PC-3 (cell line): ENCODE measurements at regions of chrX and their contacts with region 1.

Region 1: GRCh38 chrX:49043220-49043986 is at the start of gene TFE3:
- DNase-seq: peak; percentile 99
- ATAC-seq: peak; percentile 78
- H3K4me3 ChIP-seq: peak within 1 kb of the TSS; percentile 96
- H3K27ac ChIP-seq: peak within 1 kb of the TSS; percentile 65
- H3K4me1 ChIP-seq: peaks cover 34% of the 10 kb centered on the region
- H3K27me3 ChIP-seq: no peaks in the 10 kb centered on the region
- CTCF ChIP-seq: peak; percentile 68
- total RNA-seq, gene TFE3: 46.9 and 56.9 TPM in 2 replicates

Region 2: GRCh38 chrX:48897621-48898306 is 145.6 kb before region 1 on chrX and contains the starts of genes PQBP1 and TIMM17B:
- CTCF ChIA-PET with region 1: no interaction called
- POLR2A ChIA-PET with region 1: no interaction called
- intact Hi-C with region 1: loop called (anchors 5 kb)
- DNase-seq: peak; percentile 97
- ATAC-seq: peak; percentile 93
- H3K4me3 ChIP-seq: peak within 1 kb of the TSS; percentile 92
- H3K27ac ChIP-seq: peak within 1 kb of the TSS; percentile 91
- H3K4me1 ChIP-seq: peaks cover 17% of the 10 kb centered on the region
- H3K27me3 ChIP-seq: no peaks in the 10 kb centered on the region
- CTCF ChIP-seq: no peak
- total RNA-seq, gene PQBP1: 189 and 241 TPM in 2 replicates
- total RNA-seq, gene TIMM17B: 101 and 119 TPM in 2 replicates

Region 3: DNA sequence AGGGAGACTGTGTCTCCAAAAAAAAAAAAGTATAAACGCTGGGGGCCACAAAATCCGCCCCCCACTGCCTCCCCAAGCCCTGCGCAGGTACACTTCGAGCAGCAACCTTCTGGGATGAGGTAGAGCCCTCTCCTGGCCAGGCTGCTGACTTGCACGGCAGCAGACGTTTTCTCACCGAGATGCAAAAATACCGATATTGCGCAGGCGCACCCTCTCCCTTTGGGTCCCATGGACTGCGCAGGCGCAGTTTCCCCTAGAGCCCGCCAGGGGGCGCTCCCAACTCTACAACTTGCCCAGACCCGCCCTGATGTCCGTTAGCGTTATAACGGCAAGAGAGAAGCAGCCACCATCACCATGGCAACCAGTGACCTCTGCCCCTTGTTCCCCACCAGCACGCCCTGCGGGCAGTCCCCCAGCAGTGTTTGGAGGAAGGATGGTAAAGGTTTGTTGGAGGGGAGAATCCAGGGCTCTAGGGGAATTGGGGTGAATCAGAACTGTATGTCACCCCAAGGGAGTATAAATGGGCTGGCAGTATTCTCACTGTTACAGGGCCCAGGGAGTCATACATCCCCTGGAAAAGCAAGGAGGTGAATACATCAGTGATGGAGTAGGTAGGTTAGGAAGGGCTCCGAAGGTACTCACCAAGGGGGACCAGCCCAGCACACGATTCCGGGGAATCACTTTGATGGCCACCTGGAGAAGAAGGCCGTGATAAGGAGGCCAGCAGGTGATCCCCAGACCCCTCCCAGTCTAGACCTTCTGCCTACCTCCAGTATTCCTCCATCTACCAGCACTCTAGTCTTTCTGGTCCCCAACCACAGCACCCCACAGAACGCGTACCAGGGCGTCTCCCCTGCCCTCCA is 126.0 kb before region 1 on chrX:
- CTCF ChIA-PET with region 1: no interaction called
- POLR2A ChIA-PET with region 1: no interaction called
- intact Hi-C with region 1: loop called (anchors 1 kb)
- DNase-seq: peak; percentile 93
- ATAC-seq: peak; percentile 36
- H3K4me3 ChIP-seq: peak overlapping the region; percentile 90
- H3K27ac ChIP-seq: no peak overlapping the region
- H3K4me1 ChIP-seq: peaks cover 19% of the 10 kb centered on the region
- H3K27me3 ChIP-seq: no peaks in the 10 kb centered on the region
- CTCF ChIP-seq: peak; percentile 91

Region 4: GRCh38 chrX:48933757-48934156 is 109.6 kb before region 1 on chrX:
- CTCF ChIA-PET with region 1: no interaction called
- POLR2A ChIA-PET with region 1: no interaction called
- intact Hi-C with region 1: no loop called
- DNase-seq: no peak
- ATAC-seq: no peak
- H3K4me3 ChIP-seq: no peak overlapping the region
- H3K27ac ChIP-seq: no peak overlapping the region
- H3K4me1 ChIP-seq: no peaks in the 10 kb centered on the region
- H3K27me3 ChIP-seq: no peaks in the 10 kb centered on the region
- CTCF ChIP-seq: no peak

Region 5: GRCh38 chrX:48957827-48958634 is 85.4 kb before region 1 on chrX:
- CTCF ChIA-PET with region 1: no interaction called
- POLR2A ChIA-PET with region 1: interaction called, 6 read pairs
- intact Hi-C with region 1: loop called (anchors 1 kb)
- DNase-seq: peak; percentile 97
- ATAC-seq: peak; percentile 91
- H3K4me3 ChIP-seq: peak overlapping the region; percentile 89
- H3K27ac ChIP-seq: peak overlapping the region; percentile 96
- H3K4me1 ChIP-seq: peaks cover 19% of the 10 kb centered on the region
- H3K27me3 ChIP-seq: no peaks in the 10 kb centered on the region
- CTCF ChIP-seq: no peak

Region 6: GRCh38 chrX:48972220-48973167 is 70.9 kb before region 1 on chrX:
- CTCF ChIA-PET with region 1: interaction called, 4 read pairs
- POLR2A ChIA-PET with region 1: no interaction called
- intact Hi-C with region 1: loop called (anchors 1 kb)
- DNase-seq: peak; percentile 55
- ATAC-seq: peak; percentile 70
- H3K4me3 ChIP-seq: no peak overlapping the region
- H3K27ac ChIP-seq: no peak overlapping the region
- H3K4me1 ChIP-seq: no peaks in the 10 kb centered on the region
- H3K27me3 ChIP-seq: no peaks in the 10 kb centered on the region
- CTCF ChIP-seq: peak; percentile 75

Region 7: GRCh38 chrX:49002091-49002935 is 41.1 kb before region 1 on chrX and contains the start of gene GRIPAP1:
- CTCF ChIA-PET with region 1: interaction called, 7 read pairs
- POLR2A ChIA-PET with region 1: interaction called, 12 read pairs
- intact Hi-C with region 1: loop called (anchors 1 kb)
- DNase-seq: peak; percentile 88
- ATAC-seq: peak; percentile 71
- H3K4me3 ChIP-seq: peak within 1 kb of the TSS; percentile 93
- H3K27ac ChIP-seq: peak within 1 kb of the TSS; percentile 64
- H3K4me1 ChIP-seq: no peaks in the 10 kb centered on the region
- H3K27me3 ChIP-seq: no peaks in the 10 kb centered on the region
- CTCF ChIP-seq: no peak
- total RNA-seq, gene GRIPAP1: 31.1 and 44.3 TPM in 2 replicates

Region 8: GRCh38 chrX:49019599-49020249 is 23.7 kb before region 1 on chrX:
- CTCF ChIA-PET with region 1: no interaction called
- POLR2A ChIA-PET with region 1: no interaction called
- intact Hi-C with region 1: no loop called
- DNase-seq: no peak
- ATAC-seq: no peak
- H3K4me3 ChIP-seq: no peak overlapping the region
- H3K27ac ChIP-seq: no peak overlapping the region
- H3K4me1 ChIP-seq: no peaks in the 10 kb centered on the region
- H3K27me3 ChIP-seq: no peaks in the 10 kb centered on the region
- CTCF ChIP-seq: no peak

Region 9: DNA sequence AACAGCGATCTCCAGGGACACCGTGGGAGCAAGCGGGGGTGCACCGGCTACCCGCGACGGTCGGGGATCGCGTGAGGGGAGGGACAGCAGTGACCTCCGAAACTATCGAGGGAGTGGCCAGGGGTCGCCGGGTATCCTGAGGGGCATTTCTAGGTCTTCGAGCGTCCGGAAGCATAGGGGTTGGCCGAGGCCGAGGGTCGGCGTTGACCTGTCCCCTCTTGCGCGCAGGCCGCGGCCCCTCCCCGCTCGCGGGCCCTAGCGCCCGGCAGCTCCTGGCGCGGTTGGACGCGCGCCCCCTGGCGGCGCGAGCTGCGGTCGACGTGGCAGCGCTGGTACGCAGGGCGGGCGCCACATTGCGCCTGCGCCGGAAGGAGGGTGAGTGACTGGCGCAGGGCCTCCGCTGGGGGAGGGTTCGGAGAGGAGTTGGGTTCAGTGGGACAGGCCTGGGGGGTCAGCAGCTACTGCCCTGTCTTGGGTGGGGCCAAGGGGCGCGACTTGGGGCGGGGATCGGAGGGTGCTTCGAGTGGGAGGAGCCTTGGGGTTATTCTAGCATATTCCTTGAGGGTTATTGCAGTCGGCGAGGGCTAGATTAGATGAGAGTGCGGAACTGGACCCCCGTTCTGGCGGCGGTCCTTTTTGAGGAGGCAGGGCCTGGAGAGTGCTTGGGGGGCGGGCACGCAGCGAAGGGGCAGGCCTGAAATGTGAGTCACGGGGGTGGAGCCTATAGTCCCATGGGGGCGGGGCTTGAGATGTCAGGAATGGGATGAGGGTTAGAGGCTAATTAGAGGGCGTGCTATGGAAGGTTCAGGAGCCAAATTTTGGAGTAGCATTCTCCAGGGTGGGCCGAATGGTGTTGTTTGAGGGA is 120.4 kb after region 1 on chrX:
- CTCF ChIA-PET with region 1: no interaction called
- POLR2A ChIA-PET with region 1: no interaction called
- intact Hi-C with region 1: loop called (anchors 5 kb)
- DNase-seq: peak; percentile 88
- ATAC-seq: peak; percentile 65
- H3K4me3 ChIP-seq: peak overlapping the region; percentile 69
- H3K27ac ChIP-seq: peak overlapping the region; percentile 79
- H3K4me1 ChIP-seq: peaks cover 22% of the 10 kb centered on the region
- H3K27me3 ChIP-seq: no peaks in the 10 kb centered on the region
- CTCF ChIP-seq: peak; percentile 66